Left ventricle myocardium inferior (tissue), 1 donor: ENCODE measurements at regions of chr19 and their contacts with region 1.

Region 1: GRCh38 chr19:8158411-8159074 is 9.2 kb upstream of the FBN3 start:
- DNase-seq: no peak
- H3K4me3 ChIP-seq: no peak overlapping the region
- H3K27ac ChIP-seq: no peak overlapping the region
- H3K4me1 ChIP-seq: peaks cover 16% of the 10 kb centered on the region
- H3K27me3 ChIP-seq: no peaks in the 10 kb centered on the region
- CTCF ChIP-seq: peak; percentile 80

Region 2: GRCh38 chr19:8242211-8242821 is 83.8 kb after region 1 on chr19:
- intact Hi-C with region 1: no loop called
- DNase-seq: no peak
- H3K4me3 ChIP-seq: no peak overlapping the region
- H3K27ac ChIP-seq: peak overlapping the region; percentile 92
- H3K4me1 ChIP-seq: peaks cover 50% of the 10 kb centered on the region
- H3K27me3 ChIP-seq: no peaks in the 10 kb centered on the region
- CTCF ChIP-seq: no peak

Region 3: GRCh38 chr19:8252922-8253589 is 94.5 kb after region 1 on chr19:
- intact Hi-C with region 1: loop called (anchors 2 kb)
- DNase-seq: peak; percentile 85
- H3K4me3 ChIP-seq: no peak overlapping the region
- H3K27ac ChIP-seq: no peak overlapping the region
- H3K4me1 ChIP-seq: peaks cover 25% of the 10 kb centered on the region
- H3K27me3 ChIP-seq: no peaks in the 10 kb centered on the region
- CTCF ChIP-seq: peak; percentile 97

Region 4: GRCh38 chr19:8500158-8500557 is 341.6 kb after region 1 on chr19:
- intact Hi-C with region 1: no loop called
- DNase-seq: no peak
- H3K4me3 ChIP-seq: no peak overlapping the region
- H3K27ac ChIP-seq: no peak overlapping the region
- H3K4me1 ChIP-seq: peaks cover under 1% of the 10 kb centered on the region
- H3K27me3 ChIP-seq: no peaks in the 10 kb centered on the region
- CTCF ChIP-seq: no peak